A673 (cell line): ENCODE measurements at regions of chr5 and their contacts with region 1.

Region 1: GRCh38 chr5:170633235-170634081 is 129.6 kb downstream of the KCNIP1 start:
- DNase-seq: peak; percentile 67
- H3K4me3 ChIP-seq: peak overlapping the region; percentile 39
- H3K27ac ChIP-seq: no peak overlapping the region
- H3K4me1 ChIP-seq: peaks cover 11% of the 10 kb centered on the region
- H3K27me3 ChIP-seq: no peaks in the 10 kb centered on the region
- CTCF ChIP-seq: peak; percentile 23; the same call in 1 of the 2 replicates

Region 2: GRCh38 chr5:170100066-170100943 is 533.2 kb before region 1 on chr5:
- CTCF ChIA-PET with region 1: no interaction called
- POLR2A ChIA-PET with region 1: no interaction called
- intact Hi-C with region 1: loop called (anchors 5 kb)
- DNase-seq: peak; percentile 86
- H3K4me3 ChIP-seq: no peak overlapping the region
- H3K27ac ChIP-seq: no peak overlapping the region
- H3K4me1 ChIP-seq: no peaks in the 10 kb centered on the region
- H3K27me3 ChIP-seq: no peaks in the 10 kb centered on the region
- CTCF ChIP-seq: peak; percentile 71

Region 3: DNA sequence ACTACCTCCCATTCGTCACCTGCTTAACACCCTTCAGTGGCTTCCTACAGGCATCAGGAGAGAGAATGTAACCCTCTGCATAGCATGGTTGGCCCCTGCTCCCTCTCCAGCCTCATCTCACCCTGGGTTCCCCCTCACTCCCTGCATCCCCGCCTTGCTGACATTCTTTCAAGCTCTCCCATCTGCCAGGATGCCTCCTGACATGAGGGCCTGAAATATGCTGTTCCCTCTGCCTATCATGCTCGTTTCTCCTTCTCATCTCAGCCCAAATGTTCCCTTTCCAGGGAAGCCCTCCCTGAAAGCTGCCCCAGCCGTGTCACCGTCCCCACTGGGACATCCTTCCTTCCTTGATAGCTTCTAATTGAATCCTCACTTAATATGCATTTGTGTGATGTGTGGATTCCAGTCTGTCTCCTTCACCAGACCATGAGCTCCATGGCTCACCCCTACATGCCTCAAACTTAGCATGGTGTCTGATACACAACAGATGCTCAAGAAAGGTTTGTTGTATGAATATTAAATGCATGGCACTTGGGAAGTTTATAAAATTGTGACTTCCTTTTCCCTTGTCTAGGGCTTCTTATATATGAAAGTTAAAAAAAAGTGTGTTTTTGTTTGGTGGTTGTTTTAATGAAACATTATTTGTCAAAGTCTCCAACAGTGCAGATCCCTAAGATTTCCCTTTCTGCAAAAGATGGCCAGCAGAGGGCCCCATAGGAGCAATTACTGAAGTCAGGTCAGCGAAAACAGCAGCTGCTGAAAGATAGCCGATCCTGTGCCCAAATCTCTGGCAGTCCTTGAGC is 407.9 kb before region 1 on chr5:
- CTCF ChIA-PET with region 1: interaction called, 5 read pairs
- POLR2A ChIA-PET with region 1: no interaction called
- intact Hi-C with region 1: loop called (anchors 5 kb)
- DNase-seq: peak; percentile 78
- H3K4me3 ChIP-seq: no peak overlapping the region
- H3K27ac ChIP-seq: no peak overlapping the region
- H3K4me1 ChIP-seq: peaks cover 41% of the 10 kb centered on the region
- H3K27me3 ChIP-seq: no peaks in the 10 kb centered on the region
- CTCF ChIP-seq: peak; percentile 77

Region 4: GRCh38 chr5:170267431-170268152 is 365.9 kb before region 1 on chr5:
- CTCF ChIA-PET with region 1: no interaction called
- POLR2A ChIA-PET with region 1: no interaction called
- intact Hi-C with region 1: loop called (anchors 5 kb)
- DNase-seq: peak; percentile 80
- H3K4me3 ChIP-seq: no peak overlapping the region
- H3K27ac ChIP-seq: no peak overlapping the region
- H3K4me1 ChIP-seq: no peaks in the 10 kb centered on the region
- H3K27me3 ChIP-seq: peaks cover 7% of the 10 kb centered on the region
- CTCF ChIP-seq: peak; percentile 85

Region 5: GRCh38 chr5:170393235-170393634 is 240.2 kb before region 1 on chr5:
- CTCF ChIA-PET with region 1: no interaction called
- POLR2A ChIA-PET with region 1: no interaction called
- intact Hi-C with region 1: no loop called
- DNase-seq: peak; percentile 72
- H3K4me3 ChIP-seq: no peak overlapping the region
- H3K27ac ChIP-seq: peak overlapping the region; percentile 74
- H3K4me1 ChIP-seq: peaks cover 14% of the 10 kb centered on the region
- H3K27me3 ChIP-seq: no peaks in the 10 kb centered on the region
- CTCF ChIP-seq: no peak

Region 6: GRCh38 chr5:170434966-170435605 is 198.4 kb before region 1 on chr5:
- CTCF ChIA-PET with region 1: interaction called, 5 read pairs
- POLR2A ChIA-PET with region 1: no interaction called
- intact Hi-C with region 1: loop called (anchors 2 kb)
- DNase-seq: peak; percentile 43
- H3K4me3 ChIP-seq: no peak overlapping the region
- H3K27ac ChIP-seq: no peak overlapping the region
- H3K4me1 ChIP-seq: peaks cover 6% of the 10 kb centered on the region
- H3K27me3 ChIP-seq: no peaks in the 10 kb centered on the region
- CTCF ChIP-seq: peak; percentile 87

Region 7: GRCh38 chr5:170603578-170604565 is 29.6 kb before region 1 on chr5:
- CTCF ChIA-PET with region 1: interaction called, 3 read pairs
- POLR2A ChIA-PET with region 1: no interaction called
- intact Hi-C with region 1: loop called (anchors 1 kb)
- DNase-seq: peak; percentile 68
- H3K4me3 ChIP-seq: no peak overlapping the region
- H3K27ac ChIP-seq: no peak overlapping the region
- H3K4me1 ChIP-seq: no peaks in the 10 kb centered on the region
- H3K27me3 ChIP-seq: no peaks in the 10 kb centered on the region
- CTCF ChIP-seq: peak; percentile 78

Region 8: DNA sequence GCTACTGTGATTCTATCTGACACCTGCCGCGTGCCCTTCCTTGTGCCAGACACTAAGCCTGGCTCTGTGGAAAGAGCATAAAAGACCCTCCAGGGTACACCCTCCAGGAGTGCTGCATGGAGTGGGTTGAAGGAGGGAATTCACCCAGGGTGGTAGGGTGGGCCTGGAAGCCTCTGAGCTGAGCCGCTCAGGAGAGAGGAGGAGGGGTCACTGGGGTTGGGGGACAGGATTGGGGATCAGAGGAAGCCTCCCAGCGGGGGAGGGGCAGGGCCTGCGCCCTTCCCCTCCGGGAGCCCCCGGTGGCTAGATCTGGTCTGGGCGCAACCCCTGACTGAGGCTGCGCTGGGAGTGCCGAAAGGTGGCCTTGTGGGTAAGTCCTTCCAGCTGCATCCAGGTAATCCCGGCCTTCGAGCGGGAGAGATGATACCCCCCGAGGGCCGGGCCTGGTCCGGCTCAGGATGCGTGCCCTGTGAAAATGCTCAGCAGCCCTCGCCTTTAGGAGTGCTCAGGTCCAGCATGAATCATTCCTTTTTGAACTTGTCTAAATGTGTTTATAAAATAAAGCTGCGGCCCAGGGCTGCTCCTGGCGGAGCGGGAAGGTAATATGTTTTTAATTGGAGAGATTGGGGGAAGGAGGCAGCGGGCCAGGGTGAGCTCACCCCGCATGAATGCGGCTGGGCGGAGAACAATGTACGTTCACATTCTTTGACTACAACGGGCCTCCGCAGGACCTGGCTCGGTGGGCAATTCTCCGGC is 1034.1 kb after region 1 on chr5:
- CTCF ChIA-PET with region 1: no interaction called
- POLR2A ChIA-PET with region 1: no interaction called
- intact Hi-C with region 1: no loop called
- DNase-seq: no peak
- H3K4me3 ChIP-seq: no peak overlapping the region
- H3K27ac ChIP-seq: no peak overlapping the region
- H3K4me1 ChIP-seq: no peaks in the 10 kb centered on the region
- H3K27me3 ChIP-seq: no peaks in the 10 kb centered on the region
- CTCF ChIP-seq: no peak